Activated CD4-positive, alpha-beta memory T cell treated with anti-CD3 and anti-CD28 coated beads, Interleukin-2, amount 10 ng/mL, durations not matched to agents 7 days and 5 days (primary cell): ENCODE measurements at regions of chr3 and their contacts with region 1.

Region 1: DNA sequence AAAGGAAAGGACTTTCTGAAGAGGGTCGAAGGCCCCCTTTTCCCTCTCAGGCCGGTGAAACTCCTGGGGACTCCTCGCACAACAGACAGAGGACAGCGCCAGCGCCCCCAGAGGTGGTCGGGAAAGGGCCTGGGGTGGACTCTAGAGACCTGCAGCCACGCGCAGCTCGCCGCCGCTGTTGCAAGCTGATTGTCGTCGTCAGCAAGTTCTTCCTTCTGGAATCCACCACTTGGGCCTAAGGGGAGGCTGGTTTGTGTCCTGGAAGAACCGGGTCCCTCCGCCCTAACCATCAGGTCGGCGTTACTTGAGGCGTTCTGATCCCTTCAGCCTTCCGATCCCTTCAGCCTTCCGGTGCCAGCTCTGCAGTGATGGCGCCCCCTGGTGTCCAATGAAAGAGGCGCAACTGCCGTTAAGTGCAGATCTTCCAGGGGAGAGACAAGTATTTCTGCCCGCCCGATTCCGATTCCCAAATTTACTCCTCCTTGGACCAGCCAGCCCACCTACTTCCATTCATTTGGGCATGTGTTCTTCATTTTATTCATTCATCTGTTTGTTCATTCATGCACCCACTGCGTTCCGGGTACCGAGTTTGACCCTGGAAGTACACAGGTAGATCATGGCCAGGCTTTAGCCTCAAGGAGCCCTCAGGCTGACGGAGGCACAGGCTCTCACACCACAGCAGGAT is 77.2 kb upstream of the SLC6A11 start:
- DNase-seq: peak; percentile 70
- H3K4me3 Mint-ChIP-seq: no peak overlapping the region
- H3K27ac Mint-ChIP-seq: no peak overlapping the region
- H3K4me1 Mint-ChIP-seq: peaks cover 3% of the 10 kb centered on the region
- H3K27me3 Mint-ChIP-seq: peaks cover 21% of the 10 kb centered on the region

Region 2: GRCh38 chr3:10344147-10344943 is 394.5 kb before region 1 on chr3:
- CTCF ChIA-PET with region 1: interaction called, 18 read pairs
- POLR2A ChIA-PET with region 1: no interaction called
- DNase-seq: peak; percentile 60
- H3K4me3 Mint-ChIP-seq: no peak overlapping the region
- H3K27ac Mint-ChIP-seq: no peak overlapping the region
- H3K4me1 Mint-ChIP-seq: no peaks in the 10 kb centered on the region
- H3K27me3 Mint-ChIP-seq: no peaks in the 10 kb centered on the region

Region 3: GRCh38 chr3:10417849-10418248 is 321.0 kb before region 1 on chr3:
- CTCF ChIA-PET with region 1: interaction called, 16 read pairs
- POLR2A ChIA-PET with region 1: no interaction called
- DNase-seq: no peak
- H3K4me3 Mint-ChIP-seq: no peak overlapping the region
- H3K27ac Mint-ChIP-seq: no peak overlapping the region
- H3K4me1 Mint-ChIP-seq: peaks cover 6% of the 10 kb centered on the region
- H3K27me3 Mint-ChIP-seq: peaks cover 13% of the 10 kb centered on the region

Region 4: DNA sequence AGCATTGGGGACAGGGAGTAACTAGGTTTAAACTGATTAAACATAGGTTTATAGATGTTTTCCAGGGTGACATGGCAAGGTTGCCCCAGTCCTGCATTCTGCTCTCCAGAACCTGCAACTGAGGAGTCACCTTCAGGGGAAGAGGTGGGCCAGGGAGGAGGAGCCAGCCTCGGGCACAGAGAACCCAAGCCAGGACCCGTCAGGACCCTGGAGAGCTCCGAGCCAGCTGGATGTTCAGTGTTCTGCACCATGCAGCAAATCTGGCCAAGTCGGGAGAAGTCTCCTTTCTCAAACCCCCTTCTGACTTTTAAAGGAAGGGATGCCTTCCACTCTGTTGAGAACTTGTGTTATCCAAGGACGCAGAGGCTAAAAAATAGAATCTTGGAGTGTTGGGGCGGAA is 15.1 kb after region 1 on chr3:
- CTCF ChIA-PET with region 1: interaction called, 22 read pairs
- POLR2A ChIA-PET with region 1: no interaction called
- DNase-seq: peak; percentile 53
- H3K4me3 Mint-ChIP-seq: no peak overlapping the region
- H3K27ac Mint-ChIP-seq: no peak overlapping the region
- H3K4me1 Mint-ChIP-seq: peaks cover 6% of the 10 kb centered on the region
- H3K27me3 Mint-ChIP-seq: peaks cover 9% of the 10 kb centered on the region